Panc1 (cell line): ENCODE measurements at regions of chr10 and their contacts with region 1.

Region 1: GRCh38 chr10:71696628-71697326 is 22.8 kb downstream of the C10orf105 start:
- DNase-seq: peak; percentile 48
- ATAC-seq: peak; percentile 88
- H3K4me3 ChIP-seq: no peak overlapping the region
- H3K27ac ChIP-seq: no peak overlapping the region
- H3K4me1 ChIP-seq: peaks cover 21% of the 10 kb centered on the region
- H3K27me3 ChIP-seq: no peaks in the 10 kb centered on the region
- CTCF ChIP-seq: peak; percentile 99

Region 2: GRCh38 chr10:71314028-71314693 is 382.6 kb before region 1 on chr10:
- CTCF ChIA-PET with region 1: interaction called, 8 read pairs
- POLR2A ChIA-PET with region 1: no interaction called
- in situ Hi-C with region 1: no loop called
- intact Hi-C with region 1: loop called (anchors 5 kb)
- DNase-seq: peak; percentile 43
- ATAC-seq: peak; percentile 78
- H3K4me3 ChIP-seq: peak overlapping the region; percentile 23 to 38
- H3K27ac ChIP-seq: peak overlapping the region; percentile 67; the same call in 1 of the 2 replicates
- H3K4me1 ChIP-seq: peaks cover 3% of the 10 kb centered on the region
- H3K27me3 ChIP-seq: no peaks in the 10 kb centered on the region; the same call in 1 of the 2 replicates
- CTCF ChIP-seq: peak; percentile 98

Region 3: GRCh38 chr10:71653044-71653443 is 43.7 kb before region 1 on chr10:
- CTCF ChIA-PET with region 1: interaction called, 11 read pairs
- POLR2A ChIA-PET with region 1: no interaction called
- in situ Hi-C with region 1: no loop called
- intact Hi-C with region 1: no loop called
- DNase-seq: no peak
- ATAC-seq: no peak
- H3K4me3 ChIP-seq: no peak overlapping the region
- H3K27ac ChIP-seq: no peak overlapping the region
- H3K4me1 ChIP-seq: no peaks in the 10 kb centered on the region
- H3K27me3 ChIP-seq: no peaks in the 10 kb centered on the region
- CTCF ChIP-seq: no peak

Region 4: DNA sequence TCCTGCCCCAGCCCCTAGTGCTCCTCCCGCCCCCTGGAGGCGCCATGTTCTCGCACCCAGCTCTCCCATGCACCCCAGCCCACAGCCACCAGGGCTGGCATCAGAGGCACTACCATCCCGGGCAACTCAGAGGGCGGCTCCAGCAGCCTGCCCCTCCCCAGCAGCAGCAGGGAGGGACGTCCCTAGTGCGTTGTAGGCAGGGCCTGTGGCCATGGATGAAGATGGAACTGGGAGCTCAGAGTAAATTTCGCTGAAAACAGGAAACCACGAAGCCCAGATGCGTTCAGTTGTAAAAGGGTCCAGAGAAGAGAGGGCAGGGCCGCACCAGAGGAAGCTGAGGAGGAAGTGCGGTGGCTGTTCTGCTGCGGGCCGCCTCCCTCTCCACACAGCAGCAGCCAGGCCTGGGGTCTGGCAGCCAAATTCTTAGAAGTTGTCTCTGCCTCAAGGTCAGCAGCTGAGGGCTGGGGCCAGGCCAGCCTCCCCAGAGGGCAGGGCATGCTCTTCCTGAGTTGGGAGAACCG is 52.0 kb after region 1 on chr10:
- CTCF ChIA-PET with region 1: no interaction called
- POLR2A ChIA-PET with region 1: no interaction called
- in situ Hi-C with region 1: no loop called
- intact Hi-C with region 1: no loop called
- DNase-seq: no peak
- ATAC-seq: peak; percentile 47; the same call in 1 of the 2 replicates
- H3K4me3 ChIP-seq: no peak overlapping the region
- H3K27ac ChIP-seq: no peak overlapping the region
- H3K4me1 ChIP-seq: no peaks in the 10 kb centered on the region
- H3K27me3 ChIP-seq: no peaks in the 10 kb centered on the region
- CTCF ChIP-seq: no peak

Region 5: GRCh38 chr10:71772832-71773377 is 76.1 kb after region 1 on chr10:
- CTCF ChIA-PET with region 1: interaction called, 10 read pairs
- POLR2A ChIA-PET with region 1: no interaction called
- in situ Hi-C with region 1: no loop called
- intact Hi-C with region 1: no loop called
- DNase-seq: no peak
- ATAC-seq: peak; percentile 66
- H3K4me3 ChIP-seq: peak overlapping the region; percentile 60 to 64
- H3K27ac ChIP-seq: peak overlapping the region; percentile 68
- H3K4me1 ChIP-seq: peaks cover 56% of the 10 kb centered on the region
- H3K27me3 ChIP-seq: no peaks in the 10 kb centered on the region
- CTCF ChIP-seq: no peak

Region 6: GRCh38 chr10:72445851-72446250 is 749.1 kb after region 1 on chr10:
- CTCF ChIA-PET with region 1: interaction called, 10 read pairs
- POLR2A ChIA-PET with region 1: no interaction called
- in situ Hi-C with region 1: no loop called
- intact Hi-C with region 1: no loop called
- DNase-seq: no peak
- ATAC-seq: no peak
- H3K4me3 ChIP-seq: no peak overlapping the region
- H3K27ac ChIP-seq: no peak overlapping the region
- H3K4me1 ChIP-seq: no peaks in the 10 kb centered on the region
- H3K27me3 ChIP-seq: no peaks in the 10 kb centered on the region
- CTCF ChIP-seq: no peak